ENCODE measurements at regions of chr13 and their contacts with region 1.

Region 1: DNA sequence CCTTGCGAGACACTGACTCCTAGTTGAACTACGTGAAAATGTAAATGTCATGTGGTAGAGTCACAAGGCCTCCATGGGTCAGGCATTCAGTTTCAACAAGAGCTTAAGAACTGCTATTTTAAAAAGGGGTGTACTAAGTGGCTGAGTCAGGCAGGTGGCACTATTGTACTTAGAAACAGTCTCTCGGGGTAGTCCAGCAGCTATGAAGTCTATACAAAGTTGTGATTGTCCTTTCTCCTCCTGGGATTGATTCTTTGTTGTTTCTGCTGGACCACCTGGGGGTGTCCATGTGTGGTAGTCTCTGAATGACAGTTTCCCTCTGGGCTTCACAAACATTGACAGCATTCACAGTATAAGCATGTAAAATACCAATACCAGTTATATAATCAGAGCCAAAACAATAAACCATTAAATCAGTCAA is 33.0 kb downstream of the UGGT2 start:
- DNase-seq: peak; percentile 19
- ATAC-seq: peak; percentile 36
- H3K4me3 Mint-ChIP-seq: no peak overlapping the region
- H3K27ac Mint-ChIP-seq: no peak overlapping the region
- H3K4me1 Mint-ChIP-seq: no peaks in the 10 kb centered on the region
- H3K27me3 Mint-ChIP-seq: no peaks in the 10 kb centered on the region

Region 2: GRCh38 chr13:96817336-96817941 is 797.3 kb after region 1 on chr13:
- CTCF ChIA-PET with region 1: interaction called, 5 read pairs
- POLR2A ChIA-PET with region 1: no interaction called
- intact Hi-C with region 1: loop called in 1 of 2 experiments (anchors 2 kb)
- DNase-seq: no peak
- ATAC-seq: no peak
- H3K4me3 Mint-ChIP-seq: no peak overlapping the region
- H3K27ac Mint-ChIP-seq: no peak overlapping the region
- H3K4me1 Mint-ChIP-seq: no peaks in the 10 kb centered on the region
- H3K27me3 Mint-ChIP-seq: no peaks in the 10 kb centered on the region

Region 3: GRCh38 chr13:96940961-96941360 is 920.8 kb after region 1 on chr13:
- CTCF ChIA-PET with region 1: no interaction called
- POLR2A ChIA-PET with region 1: no interaction called
- intact Hi-C with region 1: no loop called
- DNase-seq: no peak
- ATAC-seq: no peak
- H3K4me3 Mint-ChIP-seq: no peak overlapping the region
- H3K27ac Mint-ChIP-seq: no peak overlapping the region
- H3K4me1 Mint-ChIP-seq: no peaks in the 10 kb centered on the region
- H3K27me3 Mint-ChIP-seq: peaks cover 3% of the 10 kb centered on the region

Region 4: DNA sequence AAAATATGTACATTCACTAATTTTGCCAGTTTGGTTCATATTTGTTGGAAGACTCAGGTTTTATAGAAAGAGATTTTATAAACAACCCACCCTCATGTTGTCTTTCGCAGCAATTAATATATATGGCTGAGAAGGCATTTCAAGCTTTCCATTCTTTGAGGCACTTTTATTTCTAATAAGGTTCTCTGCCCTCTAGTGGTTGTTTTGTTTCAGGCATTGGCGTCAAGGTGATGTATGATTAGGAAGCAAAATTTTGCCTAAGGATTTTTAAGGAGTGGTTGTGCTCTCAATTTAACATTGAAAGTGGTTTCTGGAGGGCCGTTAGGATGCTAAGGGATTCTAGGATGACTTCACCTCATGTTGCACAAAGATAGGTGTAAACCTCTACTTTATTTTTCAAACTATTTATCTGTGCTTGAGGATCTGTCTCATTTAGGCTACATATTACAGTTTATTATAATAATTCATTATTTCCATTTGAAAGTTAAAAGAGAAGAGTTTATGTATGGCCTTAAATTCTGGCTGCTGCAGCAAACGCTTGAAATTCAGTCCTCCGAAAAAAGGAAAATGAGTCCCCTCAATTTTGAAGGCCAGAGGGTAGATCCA is 938.2 kb after region 1 on chr13:
- CTCF ChIA-PET with region 1: interaction called, 5 read pairs
- POLR2A ChIA-PET with region 1: no interaction called
- intact Hi-C with region 1: loop called (anchors 1 to 5 kb)
- DNase-seq: peak; percentile 6
- ATAC-seq: no peak
- H3K4me3 Mint-ChIP-seq: no peak overlapping the region
- H3K27ac Mint-ChIP-seq: no peak overlapping the region
- H3K4me1 Mint-ChIP-seq: no peaks in the 10 kb centered on the region
- H3K27me3 Mint-ChIP-seq: peaks cover 2% of the 10 kb centered on the region